ENCODE measurements at regions of chr14 and their contacts with region 1.

Region 1: GRCh38 chr14:32109676-32110547 is 32.8 kb downstream of the ARHGAP5 start:
- DNase-seq: no peak
- H3K4me3 ChIP-seq: no peak overlapping the region
- H3K27ac ChIP-seq: no peak overlapping the region
- H3K4me1 ChIP-seq: no peaks in the 10 kb centered on the region
- H3K27me3 ChIP-seq: no peaks in the 10 kb centered on the region
- CTCF ChIP-seq: no peak
- POLR2A ChIP-seq: no peak

Region 2: DNA sequence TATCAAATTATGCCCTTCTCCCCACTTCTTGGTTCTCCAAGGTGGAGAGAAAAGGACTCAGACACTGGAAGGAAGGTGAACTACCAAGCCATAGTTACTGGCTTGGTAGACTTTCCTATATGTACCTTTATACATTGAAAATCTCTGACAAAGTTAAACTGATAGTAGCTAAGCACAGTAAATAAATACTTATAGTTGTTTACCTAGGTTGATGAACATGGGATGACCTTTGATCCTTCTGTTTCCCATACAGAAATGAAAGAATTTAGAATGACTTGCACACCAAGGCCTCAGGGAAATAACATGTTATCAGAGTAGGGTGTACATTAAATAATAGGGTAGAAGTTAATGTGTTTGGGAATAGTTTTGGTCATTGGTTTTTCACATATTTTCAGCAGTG is 26.1 kb before region 1 on chr14:
- CTCF ChIA-PET with region 1: no interaction called
- POLR2A ChIA-PET with region 1: no interaction called
- dilution Hi-C with region 1: no loop called
- intact Hi-C with region 1: loop called (anchors 2 kb)
- DNase-seq: no peak
- H3K4me3 ChIP-seq: no peak overlapping the region
- H3K27ac ChIP-seq: no peak overlapping the region
- H3K4me1 ChIP-seq: peaks cover 3% of the 10 kb centered on the region
- H3K27me3 ChIP-seq: no peaks in the 10 kb centered on the region
- CTCF ChIP-seq: no peak
- POLR2A ChIP-seq: no peak